RWPE1 (cell line): ENCODE measurements at regions of chr16 and their contacts with region 1.

Region 1: DNA sequence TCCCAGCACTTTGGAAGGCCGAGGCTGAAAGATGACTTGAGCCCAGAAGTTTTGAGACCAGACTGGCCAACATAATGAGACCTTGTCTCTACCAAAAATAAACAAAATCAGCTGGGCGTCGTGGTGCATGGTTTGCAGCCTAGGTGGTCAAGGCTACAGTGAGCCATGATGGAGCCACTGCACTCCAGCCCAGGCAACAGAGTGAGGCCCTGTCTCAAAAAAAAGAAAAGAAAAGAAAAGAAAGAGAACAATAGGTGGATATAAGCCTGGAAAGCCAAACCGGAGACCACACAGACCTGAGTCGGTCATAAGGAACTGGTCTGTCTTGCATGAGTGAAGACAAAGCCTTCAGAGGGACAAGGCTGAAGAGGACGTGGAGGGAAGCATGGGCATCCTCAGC is 14.4 kb downstream of the ATP6V0D1 start:
- DNase-seq: no peak
- H3K27ac ChIP-seq: peak overlapping the region; percentile 25
- CTCF ChIP-seq: no peak

Region 2: GRCh38 chr16:67428146-67428731 is 38.3 kb before region 1 on chr16:
- CTCF ChIA-PET with region 1: interaction called, 19 read pairs
- POLR2A ChIA-PET with region 1: no interaction called
- DNase-seq: peak; percentile 60
- H3K27ac ChIP-seq: no peak overlapping the region
- CTCF ChIP-seq: peak; percentile 80

Region 3: DNA sequence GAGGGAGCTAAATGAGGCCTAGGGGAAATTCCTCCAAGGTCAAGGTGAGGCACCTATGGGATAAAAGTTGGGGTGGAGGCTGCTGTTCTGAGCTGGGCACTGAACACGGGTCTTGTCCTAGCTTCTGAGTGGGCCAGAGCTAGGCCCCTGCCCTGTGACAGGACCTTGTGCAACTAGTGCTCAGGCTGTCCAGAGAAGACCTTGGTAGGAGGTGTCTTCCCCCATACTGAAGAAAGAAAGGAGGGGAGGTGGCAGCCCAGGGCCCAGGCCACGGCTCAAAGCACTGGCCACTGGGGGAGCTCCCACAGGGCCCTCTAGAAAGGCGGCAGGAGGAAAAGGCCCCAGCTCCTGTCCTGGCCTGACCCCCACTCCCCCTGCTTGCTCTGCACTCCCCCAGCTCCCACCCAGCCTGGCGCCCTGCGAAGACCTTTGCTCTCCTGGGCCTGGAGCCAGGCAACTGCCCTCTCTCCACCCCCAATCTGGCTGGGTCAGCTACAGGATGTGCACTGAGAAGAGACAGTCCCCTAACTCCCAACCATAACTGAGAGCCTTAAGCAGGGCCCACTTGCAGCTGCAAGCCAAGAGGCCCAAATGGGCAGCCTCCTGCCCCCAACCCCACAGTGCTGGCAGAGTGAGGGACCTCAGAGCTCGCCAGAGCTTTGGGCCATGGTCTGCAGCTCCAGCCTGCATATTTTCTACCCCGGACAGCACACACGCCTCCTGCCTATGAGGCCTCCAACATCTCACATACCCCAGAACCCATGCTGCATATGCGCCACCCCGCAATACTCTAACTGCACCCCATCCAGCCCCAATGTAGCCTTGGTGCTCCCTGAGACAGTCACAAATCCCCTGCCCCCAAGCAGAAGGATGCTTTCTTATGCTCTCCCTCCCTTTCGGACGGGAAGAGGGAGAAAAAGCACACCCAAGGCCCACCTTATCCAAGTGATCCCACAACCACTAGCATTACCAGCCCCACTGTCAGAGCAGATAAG is 20.4 kb before region 1 on chr16:
- CTCF ChIA-PET with region 1: interaction called, 13 read pairs
- POLR2A ChIA-PET with region 1: no interaction called
- DNase-seq: no peak
- H3K27ac ChIP-seq: peak overlapping the region; percentile 23
- CTCF ChIP-seq: no peak